Ascending aorta (tissue), 2 donors: ENCODE measurements at regions of chr1 and their contacts with region 1.

Region 1: DNA sequence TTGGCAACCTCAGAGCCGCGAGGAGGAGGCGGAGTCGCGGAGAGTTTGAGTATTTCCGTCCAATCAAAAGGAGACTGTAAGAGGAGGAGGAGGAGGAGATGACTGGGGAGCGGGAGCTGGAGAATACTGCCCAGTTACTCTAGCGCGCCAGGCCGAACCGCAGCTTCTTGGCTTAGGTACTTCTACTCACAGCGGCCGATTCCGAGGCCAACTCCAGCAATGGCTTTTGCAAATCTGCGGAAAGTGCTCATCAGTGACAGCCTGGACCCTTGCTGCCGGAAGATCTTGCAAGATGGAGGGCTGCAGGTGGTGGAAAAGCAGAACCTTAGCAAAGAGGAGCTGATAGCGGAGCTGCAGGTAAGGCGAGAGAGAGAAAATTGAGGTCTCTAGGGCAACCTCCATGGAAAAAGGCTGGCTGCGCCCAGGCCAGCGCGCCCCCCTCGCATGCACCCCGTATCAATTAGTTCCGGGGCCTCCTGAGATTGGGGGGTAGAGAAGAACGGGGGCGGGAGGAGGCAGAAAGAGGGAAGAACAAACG is at the start of gene PHGDH:
- DNase-seq: peak in 1 of 2 donors; percentile 83
- H3K4me3 ChIP-seq: peak within 1 kb of the TSS; percentile 64 to 81
- H3K27ac ChIP-seq: peak within 1 kb of the TSS; percentile 86 to 87
- H3K4me1 ChIP-seq: peaks cover 0 to 19% of the 10 kb centered on the region in 2 donors
- H3K27me3 ChIP-seq: no peaks in the 10 kb centered on the region
- CTCF ChIP-seq: no peak
- total RNA-seq, gene PHGDH: 61.7 TPM

Region 2: GRCh38 chr1:119329541-119330461 is 382.1 kb before region 1 on chr1:
- intact Hi-C with region 1: no loop called
- DNase-seq: no peak
- H3K4me3 ChIP-seq: no peak overlapping the region
- H3K27ac ChIP-seq: no peak overlapping the region
- H3K4me1 ChIP-seq: peaks cover 0 to 4% of the 10 kb centered on the region in 2 donors
- H3K27me3 ChIP-seq: no peaks in the 10 kb centered on the region
- CTCF ChIP-seq: no peak

Region 3: DNA sequence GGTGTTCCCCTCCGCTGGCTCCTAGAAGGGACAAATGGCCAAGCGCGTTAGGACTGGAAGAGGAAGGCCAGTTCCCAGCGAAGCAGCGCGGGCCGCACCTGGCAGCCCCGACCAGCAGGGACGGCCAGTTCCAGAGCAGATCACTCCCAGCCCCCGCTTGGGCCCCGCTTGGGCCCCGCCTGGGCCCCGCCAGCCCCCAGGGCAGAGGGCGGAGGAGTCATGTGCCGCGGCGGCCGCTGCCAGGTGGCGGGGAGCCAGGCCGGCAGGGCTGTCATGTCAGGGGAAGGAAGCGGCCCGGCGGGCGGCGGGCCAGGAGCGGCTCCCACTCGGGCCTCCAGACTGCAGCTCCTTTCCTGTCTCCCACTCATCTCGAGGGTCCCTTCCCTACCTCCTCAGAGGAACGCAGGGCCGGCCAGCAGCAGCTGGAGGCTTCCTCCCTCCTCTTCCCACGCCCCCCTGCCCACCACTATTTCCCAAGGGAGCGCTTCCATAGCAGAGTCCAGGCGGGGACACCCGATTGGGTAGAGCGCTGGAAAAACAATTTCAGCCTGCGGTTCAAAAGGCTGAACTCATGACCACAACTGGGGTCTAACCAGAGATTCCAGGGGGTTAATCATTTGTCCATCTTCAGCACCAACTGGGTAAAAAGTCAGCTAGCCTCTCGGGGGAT is 80.3 kb before region 1 on chr1:
- intact Hi-C with region 1: loop called (anchors 5 kb)
- DNase-seq: peak; percentile 28 to 88
- H3K4me3 ChIP-seq: peak overlapping the region; percentile 50 to 65
- H3K27ac ChIP-seq: peak overlapping the region; percentile 63 to 84
- H3K4me1 ChIP-seq: peaks cover 14 to 20% of the 10 kb centered on the region in 2 donors
- H3K27me3 ChIP-seq: no peaks in the 10 kb centered on the region
- CTCF ChIP-seq: no peak

Region 4: DNA sequence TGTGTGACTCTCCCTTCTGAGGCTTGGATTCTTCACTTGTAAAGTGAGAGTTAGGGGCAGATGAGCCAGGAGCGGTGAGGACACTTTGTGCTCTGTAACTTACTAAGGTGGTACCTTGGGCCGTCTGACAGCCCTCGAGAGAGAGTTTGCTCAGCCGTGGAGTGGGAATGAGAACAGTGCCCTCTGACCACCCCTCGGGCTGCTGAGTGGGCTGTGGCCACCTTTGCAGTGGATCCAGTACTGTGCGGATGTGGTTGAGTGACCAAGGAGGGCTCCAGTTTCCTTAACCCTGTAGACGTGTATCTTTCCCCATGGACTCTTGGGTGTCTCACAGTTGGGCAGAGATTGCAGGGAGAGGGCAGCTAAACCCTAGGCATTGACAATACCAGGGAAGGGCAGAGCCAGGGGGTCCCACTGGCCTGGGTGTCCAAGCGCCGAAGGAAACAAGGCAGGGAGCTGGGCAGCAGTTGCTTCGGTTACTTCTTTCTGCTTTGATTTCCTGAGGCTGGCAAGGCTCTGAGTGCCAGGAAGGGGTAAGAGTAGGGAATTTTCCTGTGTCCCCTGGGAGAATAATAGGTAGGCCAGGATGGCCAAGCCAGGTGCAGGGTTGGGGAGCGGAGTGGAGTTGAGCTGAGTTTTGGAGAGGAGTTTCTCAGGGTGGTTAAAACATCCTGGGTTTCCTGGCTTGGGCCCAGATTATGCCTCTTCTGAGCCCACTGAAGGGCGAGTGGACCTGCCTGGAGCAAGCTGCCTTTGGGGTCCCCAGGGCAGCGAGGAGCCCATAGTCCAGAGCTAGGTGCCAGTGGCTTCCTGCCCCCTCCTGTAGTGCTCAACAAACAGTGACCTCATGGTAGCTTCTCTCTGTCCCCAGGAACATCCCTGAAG is 29.3 kb after region 1 on chr1:
- intact Hi-C with region 1: loop called (anchors 2 kb)
- DNase-seq: no peak
- H3K4me3 ChIP-seq: no peak overlapping the region
- H3K27ac ChIP-seq: peak overlapping the region; percentile 41 to 66
- H3K4me1 ChIP-seq: peaks cover 4% of the 10 kb centered on the region in 2 donors
- H3K27me3 ChIP-seq: no peaks in the 10 kb centered on the region
- CTCF ChIP-seq: no peak

Region 5: GRCh38 chr1:119779869-119780356 is 68.0 kb after region 1 on chr1:
- intact Hi-C with region 1: no loop called
- DNase-seq: no peak
- H3K4me3 ChIP-seq: no peak overlapping the region
- H3K27ac ChIP-seq: no peak overlapping the region
- H3K4me1 ChIP-seq: no peaks in the 10 kb centered on the region
- H3K27me3 ChIP-seq: no peaks in the 10 kb centered on the region
- CTCF ChIP-seq: no peak